ENCODE measurements at regions of chr15 and their contacts with region 1.

Region 1: GRCh38 chr15:58987489-58988005 is at the start of gene RNF111:
- DNase-seq: peak; percentile 68
- H3K4me3 ChIP-seq: peak within 1 kb of the TSS; percentile 69 to 98 (median 73)
- H3K27ac ChIP-seq: peak within 1 kb of the TSS; percentile 88 to 98 (median 91)
- H3K4me1 ChIP-seq: peaks cover 0 to 41% (median 23%) of the 10 kb centered on the region in 3 donors
- H3K27me3 ChIP-seq: no peaks in the 10 kb centered on the region
- CTCF ChIP-seq: no peak
- POLR2A ChIP-seq: peak in 3 of 4 donors; percentile 58 to 89 (median 76)
- total RNA-seq, gene RNF111: 15.2 to 19.6 (median 16.5) TPM

Region 2: GRCh38 chr15:59484399-59484798 is 496.9 kb after region 1 on chr15:
- intact Hi-C with region 1: loop called (anchors 10 kb)
- DNase-seq: no peak
- H3K4me3 ChIP-seq: no peak overlapping the region
- H3K27ac ChIP-seq: no peak overlapping the region
- H3K4me1 ChIP-seq: peaks cover 0 to 14% (median 3%) of the 10 kb centered on the region in 3 donors
- H3K27me3 ChIP-seq: no peaks in the 10 kb centered on the region
- CTCF ChIP-seq: no peak
- POLR2A ChIP-seq: no peak

Measured in esophagus squamous epithelium (tissue), 5 donors.